Activated CD4-positive, alpha-beta T cell treated with anti-CD3 and anti-CD28 coated beads for 36 hours (primary cell): ENCODE measurements at regions of chr2 and their contacts with region 1.

Region 1: DNA sequence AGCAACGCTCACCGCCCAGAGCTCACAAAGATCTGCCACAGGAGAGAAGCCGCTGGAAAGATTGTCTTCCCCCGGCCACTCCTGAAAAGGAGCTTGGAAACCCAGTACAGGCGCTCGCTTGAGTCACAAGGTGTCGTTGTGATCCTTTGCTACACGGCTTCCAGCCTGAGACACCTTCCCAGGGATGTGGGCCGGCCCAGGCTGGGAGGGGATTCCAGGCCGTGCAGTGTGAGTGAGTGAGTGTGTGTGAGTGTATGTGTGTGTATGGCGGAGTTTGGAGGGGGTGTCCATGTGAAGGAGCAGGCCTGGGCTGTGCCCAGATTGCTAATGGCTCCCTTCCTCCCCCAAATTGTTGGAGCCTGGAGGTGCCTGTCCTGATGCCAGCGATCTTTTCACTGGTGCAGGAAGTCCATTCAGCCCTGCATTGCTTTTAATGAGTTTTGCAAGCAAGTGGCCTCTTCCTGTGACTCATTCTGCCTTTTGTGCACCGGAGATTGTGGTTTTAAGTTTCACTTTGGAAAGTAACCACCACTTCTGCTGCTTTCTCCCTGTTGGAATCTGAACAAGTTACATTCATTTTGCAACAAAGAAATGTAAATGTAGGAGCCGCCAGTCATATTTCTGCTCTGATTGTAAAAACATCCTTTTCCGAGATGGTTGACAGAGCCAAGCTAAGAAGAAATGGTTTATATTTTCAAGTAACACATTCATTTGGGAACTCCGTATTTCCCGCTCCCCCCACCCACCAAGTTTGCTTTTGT is 83.7 kb downstream of the LPIN1 start:
- DNase-seq: peak; percentile 67
- ATAC-seq: peak; percentile 77
- H3K4me3 Mint-ChIP-seq: peak overlapping the region; percentile 20
- H3K27ac Mint-ChIP-seq: peak overlapping the region; percentile 58
- H3K4me1 Mint-ChIP-seq: peaks cover 40% of the 10 kb centered on the region
- H3K27me3 Mint-ChIP-seq: peaks cover 26% of the 10 kb centered on the region

Region 2: DNA sequence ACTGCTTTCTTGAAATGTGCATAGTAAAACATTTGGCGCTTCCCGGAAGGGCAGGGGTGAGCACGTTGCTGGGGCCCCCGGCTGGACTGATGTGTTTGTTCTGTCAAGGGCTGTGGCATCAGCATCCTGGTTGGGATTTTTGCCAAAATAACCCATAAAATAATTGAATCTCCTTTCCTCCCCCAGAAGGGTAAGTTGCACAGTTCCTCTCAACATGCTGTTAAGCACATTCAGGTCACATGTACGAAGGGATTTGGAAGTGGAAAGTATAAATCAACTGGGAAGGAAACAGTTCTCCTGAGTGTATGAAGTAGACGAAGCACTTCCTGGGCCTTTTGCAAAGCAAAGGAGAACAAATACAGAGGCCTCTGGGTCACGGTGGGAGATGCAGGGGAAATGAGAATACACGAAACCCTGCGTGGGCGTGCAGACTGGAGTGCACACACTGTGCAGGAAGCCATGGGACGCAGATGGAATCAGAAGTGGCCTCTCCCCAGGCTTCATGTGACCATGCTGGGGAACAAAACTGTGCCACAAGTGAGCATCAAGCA is 100.2 kb after region 1 on chr2:
- CTCF ChIA-PET with region 1: no interaction called
- POLR2A ChIA-PET with region 1: no interaction called
- intact Hi-C with region 1: no loop called
- DNase-seq: peak; percentile 15
- ATAC-seq: no peak
- H3K4me3 Mint-ChIP-seq: no peak overlapping the region
- H3K27ac Mint-ChIP-seq: no peak overlapping the region
- H3K4me1 Mint-ChIP-seq: peaks cover 10% of the 10 kb centered on the region
- H3K27me3 Mint-ChIP-seq: no peaks in the 10 kb centered on the region

Region 3: GRCh38 chr2:11945139-11946126 is 115.3 kb after region 1 on chr2:
- CTCF ChIA-PET with region 1: no interaction called
- POLR2A ChIA-PET with region 1: no interaction called
- intact Hi-C with region 1: loop called in 1 of 2 experiments (anchors 5 kb)
- DNase-seq: peak; percentile 40
- ATAC-seq: peak; percentile 91
- H3K4me3 Mint-ChIP-seq: peak overlapping the region; percentile 28
- H3K27ac Mint-ChIP-seq: no peak overlapping the region
- H3K4me1 Mint-ChIP-seq: peaks cover 9% of the 10 kb centered on the region
- H3K27me3 Mint-ChIP-seq: no peaks in the 10 kb centered on the region

Region 4: DNA sequence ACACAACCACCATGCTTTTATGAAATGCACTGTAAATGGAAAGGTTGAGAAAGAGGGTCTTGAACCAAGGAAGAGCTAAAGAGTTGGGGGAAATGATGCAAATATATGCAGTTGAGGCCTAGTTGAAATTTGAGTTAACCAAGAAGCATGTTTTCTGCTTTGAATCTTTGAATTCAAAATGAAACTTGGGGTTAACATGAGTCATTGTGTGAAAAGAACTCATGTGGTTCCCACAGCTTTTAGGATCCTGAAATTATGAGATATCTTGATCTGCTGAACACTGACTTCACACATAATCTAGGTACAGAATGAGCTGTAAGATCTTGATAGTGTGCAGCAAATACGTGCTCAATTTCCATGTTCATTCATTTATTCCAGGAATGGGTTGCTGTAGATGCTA is 463.7 kb after region 1 on chr2:
- CTCF ChIA-PET with region 1: interaction called, 3 read pairs
- POLR2A ChIA-PET with region 1: no interaction called
- intact Hi-C with region 1: loop called in 1 of 2 experiments (anchors 1 kb)
- DNase-seq: no peak
- ATAC-seq: peak; percentile 93
- H3K4me3 Mint-ChIP-seq: no peak overlapping the region
- H3K27ac Mint-ChIP-seq: peak overlapping the region; percentile 66
- H3K4me1 Mint-ChIP-seq: peaks cover 46% of the 10 kb centered on the region
- H3K27me3 Mint-ChIP-seq: peaks cover 27% of the 10 kb centered on the region

Region 5: GRCh38 chr2:12501469-12502158 is 671.5 kb after region 1 on chr2:
- CTCF ChIA-PET with region 1: no interaction called
- POLR2A ChIA-PET with region 1: no interaction called
- intact Hi-C with region 1: loop called in 1 of 2 experiments (anchors 1 kb)
- DNase-seq: peak; percentile 87
- ATAC-seq: peak; percentile 77
- H3K4me3 Mint-ChIP-seq: no peak overlapping the region
- H3K27ac Mint-ChIP-seq: peak overlapping the region; percentile 62
- H3K4me1 Mint-ChIP-seq: peaks cover 94% of the 10 kb centered on the region
- H3K27me3 Mint-ChIP-seq: no peaks in the 10 kb centered on the region

Region 6: DNA sequence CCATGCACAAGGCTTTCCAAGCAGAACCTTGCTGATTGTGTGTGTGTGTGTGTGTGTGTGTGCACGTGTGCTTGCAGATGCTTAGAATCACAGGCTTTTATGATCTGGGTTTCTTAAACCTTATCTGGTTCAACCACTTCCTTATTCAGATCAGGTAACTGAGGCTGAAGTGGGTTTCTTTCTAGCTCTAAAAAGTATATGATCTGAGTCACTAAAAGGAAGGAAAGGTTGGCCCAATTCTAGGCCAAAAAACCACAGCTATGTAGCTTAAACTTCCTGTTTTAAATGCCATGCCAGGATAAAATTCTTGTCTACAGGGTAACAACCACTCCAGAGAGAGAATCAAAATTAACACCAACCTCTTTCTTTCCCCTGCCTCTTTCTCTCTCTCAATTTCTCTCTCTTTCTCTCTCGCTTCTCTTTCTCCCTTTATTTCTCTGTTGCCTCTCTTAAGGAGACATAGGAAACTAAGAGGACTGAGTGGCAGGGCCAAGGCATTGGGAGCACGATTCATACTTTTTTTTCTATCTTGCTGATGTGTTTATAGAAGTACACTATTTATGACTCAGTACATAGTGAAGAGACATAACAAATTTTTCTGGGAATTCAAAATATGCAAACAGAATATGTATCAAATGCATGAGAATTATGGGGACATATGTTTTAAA is 1026.9 kb after region 1 on chr2:
- CTCF ChIA-PET with region 1: no interaction called
- POLR2A ChIA-PET with region 1: no interaction called
- intact Hi-C with region 1: loop called in 1 of 2 experiments (anchors 5 kb)
- DNase-seq: no peak
- ATAC-seq: peak; percentile 80
- H3K4me3 Mint-ChIP-seq: no peak overlapping the region
- H3K27ac Mint-ChIP-seq: peak overlapping the region; percentile 7
- H3K4me1 Mint-ChIP-seq: peaks cover 18% of the 10 kb centered on the region
- H3K27me3 Mint-ChIP-seq: peaks cover 10% of the 10 kb centered on the region

Region 7: DNA sequence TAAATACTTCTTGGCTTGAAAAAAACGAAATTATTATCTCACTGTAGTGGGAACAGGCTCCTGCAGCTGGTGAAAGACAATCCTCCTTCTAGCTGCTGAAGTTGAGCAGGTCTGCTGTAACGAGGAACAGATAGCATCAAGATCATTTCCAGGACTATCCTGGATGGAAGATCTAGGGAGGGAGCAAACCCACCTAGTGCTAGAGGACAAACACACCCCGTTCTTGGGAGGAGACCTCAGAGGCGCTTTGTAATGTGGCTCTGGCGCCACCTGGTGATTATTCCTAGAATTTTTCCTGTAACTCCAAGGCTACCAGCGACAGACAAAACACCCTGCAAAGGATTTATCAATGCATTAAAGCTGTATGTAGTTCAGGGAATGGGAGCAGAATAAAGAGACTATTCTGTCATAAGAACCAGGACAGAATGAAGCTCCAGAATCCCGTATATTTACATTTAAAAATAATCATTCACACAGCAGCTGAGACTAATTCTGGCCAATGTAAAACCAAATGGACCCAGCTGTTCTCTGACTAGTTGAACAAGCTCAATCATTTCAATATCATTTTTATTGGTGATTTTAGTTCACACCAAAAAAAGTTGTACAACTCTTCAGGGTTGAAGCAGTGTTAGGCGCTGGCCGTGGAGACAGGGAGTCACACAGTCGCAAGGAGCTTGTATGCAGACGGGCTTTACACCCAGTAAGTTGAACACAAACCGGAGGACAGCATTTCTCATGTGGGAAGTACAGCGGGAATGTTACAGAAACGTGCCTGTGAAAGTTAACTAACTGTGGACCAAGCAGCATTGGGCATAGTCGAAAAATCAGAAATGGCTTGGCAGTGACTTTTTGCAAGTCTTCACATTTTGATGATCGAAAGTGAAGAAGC is 1176.9 kb after region 1 on chr2:
- CTCF ChIA-PET with region 1: interaction called, 16 read pairs
- POLR2A ChIA-PET with region 1: no interaction called
- intact Hi-C with region 1: loop called (anchors 1 kb)
- DNase-seq: peak; percentile 74
- ATAC-seq: peak; percentile 63
- H3K4me3 Mint-ChIP-seq: no peak overlapping the region
- H3K27ac Mint-ChIP-seq: no peak overlapping the region
- H3K4me1 Mint-ChIP-seq: peaks cover 3% of the 10 kb centered on the region
- H3K27me3 Mint-ChIP-seq: peaks cover 11% of the 10 kb centered on the region